ENCODE measurements at regions of chr19 and their contacts with region 1.

Region 1: GRCh38 chr19:19776041-19777008 is 43.4 kb upstream of the ZNF14 start:
- DNase-seq: peak; percentile 97 to 98
- H3K4me3 ChIP-seq: peak overlapping the region; percentile 88
- H3K27ac ChIP-seq: peak overlapping the region; percentile 30
- H3K4me1 ChIP-seq: peaks cover 16% of the 10 kb centered on the region
- H3K27me3 ChIP-seq: no peaks in the 10 kb centered on the region
- CTCF ChIP-seq: no peak

Region 2: GRCh38 chr19:19515764-19516519 is 260.4 kb before region 1 on chr19 and contains the start of gene NDUFA13:
- CTCF ChIA-PET with region 1: no interaction called
- POLR2A ChIA-PET with region 1: interaction called, 13 read pairs
- intact Hi-C with region 1: no loop called
- DNase-seq: peak; percentile 88 to 92
- H3K4me3 ChIP-seq: peak within 1 kb of the TSS; percentile 98
- H3K27ac ChIP-seq: peak within 1 kb of the TSS; percentile 59
- H3K4me1 ChIP-seq: peaks cover 10% of the 10 kb centered on the region
- H3K27me3 ChIP-seq: no peaks in the 10 kb centered on the region
- CTCF ChIP-seq: peak; percentile 49; the same call in 1 of the 2 replicates
- total RNA-seq, gene NDUFA13: 203 and 309 TPM in 2 replicates

Region 3: GRCh38 chr19:19663256-19664038 is 112.9 kb before region 1 on chr19 and contains the start of gene ATP13A1:
- CTCF ChIA-PET with region 1: interaction called, 3 read pairs
- POLR2A ChIA-PET with region 1: interaction called, 7 read pairs
- intact Hi-C with region 1: loop called (anchors 1 kb)
- DNase-seq: peak; percentile 92 to 96
- H3K4me3 ChIP-seq: peak within 1 kb of the TSS; percentile 95
- H3K27ac ChIP-seq: peak within 1 kb of the TSS; percentile 64
- H3K4me1 ChIP-seq: peaks cover 19% of the 10 kb centered on the region
- H3K27me3 ChIP-seq: no peaks in the 10 kb centered on the region
- CTCF ChIP-seq: no peak
- total RNA-seq, gene ATP13A1: 41.1 and 59.7 TPM in 2 replicates

Region 4: GRCh38 chr19:19740755-19741154 is 35.6 kb before region 1 on chr19:
- CTCF ChIA-PET with region 1: no interaction called
- POLR2A ChIA-PET with region 1: no interaction called
- intact Hi-C with region 1: no loop called
- DNase-seq: no peak
- H3K4me3 ChIP-seq: no peak overlapping the region
- H3K27ac ChIP-seq: no peak overlapping the region
- H3K4me1 ChIP-seq: no peaks in the 10 kb centered on the region
- H3K27me3 ChIP-seq: peaks cover 13% of the 10 kb centered on the region
- CTCF ChIP-seq: no peak

Region 5: GRCh38 chr19:19821366-19821951 is 45.1 kb after region 1 on chr19 and contains the start of gene ZNF506:
- CTCF ChIA-PET with region 1: no interaction called
- POLR2A ChIA-PET with region 1: interaction called, 7 read pairs
- intact Hi-C with region 1: loop called (anchors 2 kb)
- DNase-seq: peak; percentile 91 to 94
- H3K4me3 ChIP-seq: peak within 1 kb of the TSS; percentile 83
- H3K27ac ChIP-seq: peak within 1 kb of the TSS; percentile 66
- H3K4me1 ChIP-seq: peaks cover 5% of the 10 kb centered on the region
- H3K27me3 ChIP-seq: no peaks in the 10 kb centered on the region
- CTCF ChIP-seq: no peak
- total RNA-seq, gene ZNF506: 12.6 and 13.1 TPM in 2 replicates

Region 6: DNA sequence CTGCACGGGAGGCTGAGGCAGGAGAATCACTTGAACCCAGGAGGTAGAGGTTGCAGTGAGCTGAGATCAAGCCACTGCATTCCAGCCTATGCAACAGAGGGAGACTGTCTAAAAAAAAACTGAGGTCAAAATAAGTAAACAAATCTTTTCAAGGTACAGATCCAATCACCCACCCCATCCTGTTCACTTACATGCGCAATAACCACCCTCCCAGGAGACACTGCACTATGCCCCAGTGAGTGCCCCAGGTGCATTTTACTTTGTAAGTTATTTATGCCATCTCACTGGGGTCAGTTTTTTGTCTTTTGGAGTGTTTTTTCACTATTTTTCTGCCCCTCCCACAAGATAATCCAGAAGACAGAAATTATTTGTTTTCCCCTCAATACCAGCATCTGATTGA is 82.4 kb after region 1 on chr19:
- CTCF ChIA-PET with region 1: no interaction called
- POLR2A ChIA-PET with region 1: no interaction called
- intact Hi-C with region 1: no loop called
- DNase-seq: no peak
- H3K4me3 ChIP-seq: no peak overlapping the region
- H3K27ac ChIP-seq: no peak overlapping the region
- H3K4me1 ChIP-seq: no peaks in the 10 kb centered on the region
- H3K27me3 ChIP-seq: no peaks in the 10 kb centered on the region
- CTCF ChIP-seq: no peak

Region 7: GRCh38 chr19:21767065-21767800 is 1990.9 kb after region 1 on chr19 and contains the start of gene ZNF100:
- CTCF ChIA-PET with region 1: no interaction called
- POLR2A ChIA-PET with region 1: no interaction called
- intact Hi-C with region 1: loop called (anchors 5 kb)
- DNase-seq: peak; percentile 84 to 86
- H3K4me3 ChIP-seq: peak within 1 kb of the TSS; percentile 79
- H3K27ac ChIP-seq: 0 out of 2 replicates have a peak within 1 kb of the TSS, but pooled peaks have one; percentile 23
- H3K4me1 ChIP-seq: peaks cover 10% of the 10 kb centered on the region
- H3K27me3 ChIP-seq: no peaks in the 10 kb centered on the region
- CTCF ChIP-seq: no peak
- total RNA-seq, gene ZNF100: 7.7 and 8.1 TPM in 2 replicates